ENCODE measurements at regions of chr1 and their contacts with region 1.

Region 1: DNA sequence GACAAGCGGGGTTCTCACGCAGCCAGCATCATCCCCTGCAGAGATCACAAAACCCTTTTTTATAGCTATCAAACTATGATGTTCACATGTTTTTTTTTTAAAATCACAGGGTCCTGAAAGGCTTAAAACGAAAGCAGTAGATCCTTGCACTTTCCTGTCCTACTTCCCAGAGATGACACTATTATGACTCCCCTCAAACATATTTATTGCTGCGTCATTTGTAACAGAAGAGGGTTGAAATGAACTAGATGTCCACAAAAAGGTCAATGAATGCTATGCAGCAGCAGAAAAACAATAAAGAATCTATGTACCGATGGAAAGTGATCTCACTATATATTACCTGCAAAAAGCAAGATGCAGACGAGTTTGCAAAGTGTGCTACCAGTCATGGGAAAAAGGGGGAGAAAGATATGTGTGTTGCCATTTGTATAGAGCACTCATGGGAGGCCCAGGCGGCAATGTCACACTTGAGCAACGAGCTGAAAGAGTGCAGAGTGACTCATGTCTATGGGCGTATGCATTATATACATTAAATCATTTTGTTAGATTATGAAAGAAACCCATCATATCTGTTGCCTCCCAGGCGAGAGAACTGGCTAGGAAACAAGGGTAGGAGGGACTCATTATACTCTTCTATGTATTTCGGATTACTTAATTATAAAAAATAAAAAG is 68.9 kb upstream of the PARP1 start:
- DNase-seq: no peak
- H3K4me3 ChIP-seq: no peak overlapping the region
- H3K4me3 Mint-ChIP-seq: no peak overlapping the region
- H3K27ac Mint-ChIP-seq: no peak overlapping the region
- H3K4me1 ChIP-seq: peaks cover 26% of the 10 kb centered on the region
- H3K4me1 Mint-ChIP-seq: peaks cover 6% of the 10 kb centered on the region
- H3K27me3 ChIP-seq: no peaks in the 10 kb centered on the region
- H3K27me3 Mint-ChIP-seq: peaks cover 3% of the 10 kb centered on the region
- CTCF ChIP-seq: no peak

Region 2: GRCh38 chr1:226519716-226520598 is 43.2 kb after region 1 on chr1:
- CTCF ChIA-PET with region 1: no interaction called
- POLR2A ChIA-PET with region 1: interaction called, 3 read pairs
- intact Hi-C with region 1: loop called (anchors 5 kb)
- DNase-seq: no peak
- H3K4me3 ChIP-seq: no peak overlapping the region
- H3K4me3 Mint-ChIP-seq: no peak overlapping the region
- H3K27ac Mint-ChIP-seq: no peak overlapping the region
- H3K4me1 ChIP-seq: no peaks in the 10 kb centered on the region
- H3K4me1 Mint-ChIP-seq: no peaks in the 10 kb centered on the region
- H3K27me3 ChIP-seq: no peaks in the 10 kb centered on the region
- H3K27me3 Mint-ChIP-seq: no peaks in the 10 kb centered on the region
- CTCF ChIP-seq: peak in 1 of 2 experiments; percentile 4